Transverse colon (tissue), 4 donors: ENCODE measurements at regions of chr2 and their contacts with region 1.

Region 1: GRCh38 chr2:1742681-1743395 is 1.5 kb downstream of the PXDN start:
- DNase-seq: peak; percentile 70
- H3K4me3 ChIP-seq: peak overlapping the region; percentile 37 to 67 (median 66)
- H3K27ac ChIP-seq: peak overlapping the region; percentile 93 to 96 (median 93)
- H3K4me1 ChIP-seq: peaks cover 5 to 25% (median 18%) of the 10 kb centered on the region in 4 donors
- H3K27me3 ChIP-seq: peaks cover 31% of the 10 kb centered on the region
- CTCF ChIP-seq: peak; percentile 30 to 42 (median 35)
- EP300 ChIP-seq: no peak
- POLR2A ChIP-seq: no peak

Region 2: DNA sequence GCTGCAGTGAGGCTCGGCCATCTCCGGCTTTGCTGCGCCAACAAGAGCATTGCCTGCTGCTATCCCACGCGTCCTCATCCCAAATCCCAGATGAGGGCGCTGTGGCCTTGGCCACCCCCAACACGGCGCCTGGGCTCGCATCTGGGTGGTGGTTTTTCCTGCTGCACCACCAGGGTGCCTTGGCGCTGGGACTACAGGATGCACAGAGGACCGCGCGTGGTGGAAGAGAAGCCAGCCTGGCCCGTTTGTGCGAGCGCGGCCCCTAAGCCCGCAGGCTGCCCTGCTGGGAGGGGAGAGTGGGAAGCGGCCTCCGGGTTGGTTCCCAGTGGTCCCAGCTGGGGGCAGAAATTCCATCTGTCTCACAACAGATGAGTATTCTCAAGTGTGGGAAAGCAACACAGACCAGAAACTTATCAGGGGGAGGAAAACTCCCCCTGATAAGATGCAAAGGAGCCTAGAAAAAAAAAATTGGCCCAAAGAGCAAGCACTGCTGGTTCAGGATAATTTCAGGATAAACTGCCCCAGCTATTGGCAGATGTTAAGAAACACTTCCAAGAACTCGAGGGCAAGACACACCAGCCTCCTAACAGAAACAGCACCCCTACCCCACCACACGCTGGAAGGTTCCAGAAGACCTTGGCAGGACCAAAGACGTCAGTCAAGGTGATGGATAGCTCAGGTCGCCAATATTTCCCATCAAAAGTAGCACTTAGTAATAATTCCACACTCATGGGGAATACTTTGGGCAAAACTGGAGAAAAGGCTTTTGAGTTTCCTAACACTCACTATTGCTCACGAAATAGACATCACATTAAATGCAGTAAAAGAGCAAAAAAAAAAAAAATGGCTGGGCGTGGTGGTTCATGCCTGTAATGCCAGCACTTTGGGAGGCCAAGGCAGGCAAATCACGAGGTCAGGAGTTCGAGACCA is 150.6 kb before region 1 on chr2:
- in situ Hi-C with region 1: loop called in 3 of 4 experiments (anchors 10 to 25 kb)
- intact Hi-C with region 1: no loop called
- DNase-seq: peak; percentile 84
- H3K4me3 ChIP-seq: no peak overlapping the region
- H3K27ac ChIP-seq: peak overlapping the region in 3 of 4 donors; percentile 5 to 39 (median 23)
- H3K4me1 ChIP-seq: peaks cover 0 to 15% (median 9%) of the 10 kb centered on the region in 4 donors
- H3K27me3 ChIP-seq: no peaks in the 10 kb centered on the region
- CTCF ChIP-seq: peak; percentile 60 to 90 (median 72)
- EP300 ChIP-seq: no peak
- POLR2A ChIP-seq: no peak

Region 3: GRCh38 chr2:1653956-1654695 is 88.7 kb before region 1 on chr2:
- in situ Hi-C with region 1: loop called in 1 of 4 experiments (anchors 10 kb)
- intact Hi-C with region 1: loop called (anchors 2 kb)
- DNase-seq: no peak
- H3K4me3 ChIP-seq: no peak overlapping the region
- H3K27ac ChIP-seq: peak overlapping the region; percentile 70 to 83 (median 75)
- H3K4me1 ChIP-seq: peaks cover 12 to 24% (median 20%) of the 10 kb centered on the region in 4 donors
- H3K27me3 ChIP-seq: no peaks in the 10 kb centered on the region
- CTCF ChIP-seq: no peak
- EP300 ChIP-seq: no peak
- POLR2A ChIP-seq: no peak

Region 4: GRCh38 chr2:1817256-1818051 is 74.6 kb after region 1 on chr2:
- in situ Hi-C with region 1: loop called in 1 of 4 experiments (anchors 10 kb)
- intact Hi-C with region 1: no loop called
- DNase-seq: peak; percentile 79
- H3K4me3 ChIP-seq: no peak overlapping the region
- H3K27ac ChIP-seq: peak overlapping the region; percentile 80 to 93 (median 86)
- H3K4me1 ChIP-seq: peaks cover 5 to 17% (median 8%) of the 10 kb centered on the region in 4 donors
- H3K27me3 ChIP-seq: no peaks in the 10 kb centered on the region
- CTCF ChIP-seq: peak; percentile 81 to 97 (median 95)
- EP300 ChIP-seq: peak; percentile 84
- POLR2A ChIP-seq: no peak

Region 5: GRCh38 chr2:1910592-1911246 is 167.9 kb after region 1 on chr2:
- in situ Hi-C with region 1: no loop called
- intact Hi-C with region 1: no loop called
- DNase-seq: no peak
- H3K4me3 ChIP-seq: no peak overlapping the region
- H3K27ac ChIP-seq: no peak overlapping the region
- H3K4me1 ChIP-seq: no peaks in the 10 kb centered on the region
- H3K27me3 ChIP-seq: no peaks in the 10 kb centered on the region
- CTCF ChIP-seq: no peak
- EP300 ChIP-seq: no peak
- POLR2A ChIP-seq: no peak